Cardiac septum (tissue), 1 donor: ENCODE measurements at regions of chr3 and their contacts with region 1.

Region 1: DNA sequence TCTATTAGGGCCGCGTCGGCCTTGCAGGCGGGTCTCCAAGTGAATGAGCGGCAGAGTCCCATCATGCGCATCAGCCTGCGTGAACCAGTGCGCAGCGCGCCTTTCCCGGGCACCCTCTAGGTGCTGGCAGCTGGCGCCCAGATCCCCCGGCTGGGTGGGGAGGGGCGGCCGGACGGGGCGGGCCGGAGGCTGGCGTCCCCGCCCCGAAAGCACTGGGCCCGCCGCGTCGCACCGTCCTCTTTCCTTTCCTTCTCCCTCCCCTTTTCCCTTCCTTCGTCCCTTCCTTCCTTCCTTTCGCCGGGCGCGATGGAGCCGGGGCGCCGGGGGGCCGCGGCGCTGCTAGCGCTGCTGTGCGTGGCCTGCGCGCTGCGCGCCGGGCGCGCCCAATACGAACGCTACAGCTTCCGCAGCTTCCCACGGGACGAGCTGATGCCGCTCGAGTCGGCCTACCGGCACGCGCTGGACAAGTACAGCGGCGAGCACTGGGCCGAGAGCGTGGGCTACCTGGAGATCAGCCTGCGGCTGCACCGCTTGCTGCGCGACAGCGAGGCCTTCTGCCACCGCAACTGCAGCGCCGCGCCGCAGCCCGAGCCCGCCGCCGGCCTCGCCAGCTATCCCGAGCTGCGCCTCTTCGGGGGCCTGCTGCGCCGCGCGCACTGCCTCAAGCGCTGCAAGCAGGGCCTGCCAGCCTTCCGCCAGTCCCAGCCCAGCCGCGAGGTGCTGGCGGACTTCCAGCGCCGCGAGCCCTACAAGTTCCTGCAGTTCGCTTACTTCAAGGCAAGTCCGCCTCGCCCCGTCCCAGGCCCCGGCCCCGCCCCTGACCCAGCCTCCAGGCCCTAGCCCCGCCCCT is at the start of gene CRTAP:
- DNase-seq: peak; percentile 98
- total RNA-seq, gene CRTAP: 91.7 TPM

Region 2: DNA sequence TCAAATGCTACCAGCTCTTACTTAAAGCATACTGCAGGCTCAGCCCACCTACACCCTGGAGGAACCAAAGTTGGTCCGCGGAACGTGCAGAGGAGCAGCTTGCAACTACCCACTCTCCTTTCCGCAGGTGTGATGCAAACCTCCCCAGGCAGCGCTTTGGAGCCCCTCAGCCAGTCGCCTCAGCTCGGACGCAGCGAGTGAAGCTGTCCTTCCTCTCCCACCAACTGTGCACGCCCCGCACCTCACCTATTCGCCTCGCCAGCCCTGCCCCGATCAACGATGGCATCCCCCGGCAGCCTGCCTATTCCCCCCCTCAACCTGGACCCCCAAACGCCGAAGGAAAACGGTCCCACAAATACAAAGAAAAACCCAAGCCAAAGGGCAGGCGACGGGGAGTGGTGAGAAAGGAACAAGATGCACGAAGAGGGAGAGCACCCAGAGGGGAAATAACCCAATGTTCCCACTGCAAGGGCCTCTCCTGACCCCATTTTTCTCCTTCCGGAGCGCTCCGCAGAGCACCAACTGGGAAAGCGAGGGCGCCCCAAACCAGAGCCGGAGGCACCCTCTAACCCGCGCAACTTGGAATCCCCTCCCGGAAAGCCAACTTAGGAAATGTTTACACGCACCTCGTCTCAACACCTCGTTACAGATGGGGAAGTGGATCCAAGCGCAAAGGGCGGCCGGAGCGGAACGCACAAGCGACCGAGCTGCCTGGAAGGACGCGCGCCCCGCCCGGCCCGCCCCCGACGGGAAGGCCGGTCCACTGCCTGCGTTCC is 17.7 kb before region 1 on chr3:
- intact Hi-C with region 1: loop called (anchors 1 kb)
- DNase-seq: peak; percentile 85

Region 3: DNA sequence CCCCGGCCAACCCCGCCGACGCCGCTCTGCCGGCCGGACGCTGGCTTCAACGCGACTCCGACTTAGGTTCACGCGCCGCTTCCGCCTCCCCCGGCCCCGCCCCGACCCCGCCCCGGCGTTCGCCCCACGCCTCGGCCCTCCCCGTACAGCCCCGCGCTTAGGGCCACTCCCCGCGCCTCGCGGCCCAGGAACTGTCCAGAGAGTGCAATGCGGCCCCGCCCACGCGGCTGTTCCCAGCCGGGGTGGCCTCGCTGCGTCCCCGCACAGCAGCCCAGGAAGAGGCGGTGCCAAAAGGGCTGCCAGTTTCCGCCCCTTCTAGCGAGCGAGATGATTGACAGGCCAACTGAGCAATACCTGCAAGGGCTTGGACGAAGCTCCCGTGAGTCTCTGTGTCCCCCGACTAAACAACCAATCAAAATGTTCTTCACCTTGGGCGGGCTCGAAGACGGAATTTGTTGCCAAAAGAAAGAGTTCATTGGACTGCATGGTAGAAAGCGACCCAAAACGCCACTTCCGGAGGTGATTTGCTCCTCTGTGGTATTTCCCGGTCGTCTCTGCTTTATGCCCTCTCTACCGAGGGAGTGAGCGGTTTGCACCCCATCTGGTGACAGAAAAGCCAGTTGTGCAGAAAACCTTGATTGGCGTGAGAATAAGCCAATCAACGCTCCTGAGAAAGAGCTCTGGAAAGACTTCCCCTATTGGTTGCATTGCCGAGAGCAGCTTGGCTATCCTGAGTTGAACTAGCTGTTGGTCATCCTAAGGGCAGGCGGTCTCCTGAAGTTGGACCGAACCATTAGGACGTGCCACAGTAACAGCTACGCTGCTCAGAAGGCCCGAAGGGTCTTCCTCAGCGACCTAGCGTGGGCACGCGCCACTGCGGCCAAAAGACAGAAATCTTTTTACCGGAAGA is 326.6 kb after region 1 on chr3 and contains the start of gene UBP1:
- intact Hi-C with region 1: loop called (anchors 5 kb)
- DNase-seq: peak; percentile 100
- total RNA-seq, gene UBP1: 46.9 TPM